ENCODE measurements at regions of chr2 and their contacts with region 1.

Region 1: DNA sequence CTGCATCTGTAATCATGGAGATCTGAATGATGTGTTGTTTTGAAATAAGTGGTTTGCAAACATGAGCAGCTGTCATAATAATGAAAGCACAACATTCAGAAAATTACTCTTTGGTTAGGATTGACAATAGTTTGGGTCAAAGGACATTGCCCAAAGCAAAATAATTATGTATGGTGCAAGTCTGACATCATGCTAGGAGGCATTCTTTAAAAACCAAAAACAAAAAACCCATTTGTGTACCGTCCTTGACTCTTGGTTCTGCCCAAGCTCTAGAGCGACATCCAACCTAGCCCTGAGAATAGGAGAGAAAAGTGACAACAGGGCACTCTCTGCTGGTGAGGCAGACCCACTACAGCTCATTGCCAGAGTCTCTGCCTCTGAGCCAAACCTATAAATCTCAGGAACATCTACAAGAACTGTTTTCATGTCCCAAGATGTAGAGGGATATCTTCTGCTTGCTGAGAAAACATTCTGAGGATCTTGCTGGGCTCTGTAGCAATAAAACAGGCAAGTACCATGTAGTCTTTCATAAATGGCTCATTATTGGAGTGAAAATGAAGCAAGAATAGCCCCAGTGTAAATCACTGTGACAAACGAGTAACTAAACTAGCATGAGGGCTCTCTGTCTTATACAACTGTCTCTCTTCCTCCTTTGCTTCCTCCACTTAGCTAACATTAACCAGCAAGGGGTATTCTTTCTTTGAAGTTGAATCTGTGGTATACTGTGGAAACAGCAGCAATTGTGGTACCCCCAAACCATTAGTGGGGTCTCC is 266.8 kb upstream of the CXCR4 start:
- DNase-seq: peak; percentile 87
- H3K4me3 Mint-ChIP-seq: peak overlapping the region; percentile 27
- H3K27ac Mint-ChIP-seq: peak overlapping the region; percentile 93
- H3K4me1 Mint-ChIP-seq: peaks cover 44% of the 10 kb centered on the region
- H3K27me3 Mint-ChIP-seq: no peaks in the 10 kb centered on the region

Region 2: GRCh38 chr2:135664623-135665068 is 720.1 kb before region 1 on chr2:
- intact Hi-C with region 1: loop called (anchors 5 kb)
- DNase-seq: no peak
- H3K4me3 Mint-ChIP-seq: no peak overlapping the region
- H3K27ac Mint-ChIP-seq: peak overlapping the region; percentile 79
- H3K4me1 Mint-ChIP-seq: peaks cover 31% of the 10 kb centered on the region
- H3K27me3 Mint-ChIP-seq: no peaks in the 10 kb centered on the region

Region 3: DNA sequence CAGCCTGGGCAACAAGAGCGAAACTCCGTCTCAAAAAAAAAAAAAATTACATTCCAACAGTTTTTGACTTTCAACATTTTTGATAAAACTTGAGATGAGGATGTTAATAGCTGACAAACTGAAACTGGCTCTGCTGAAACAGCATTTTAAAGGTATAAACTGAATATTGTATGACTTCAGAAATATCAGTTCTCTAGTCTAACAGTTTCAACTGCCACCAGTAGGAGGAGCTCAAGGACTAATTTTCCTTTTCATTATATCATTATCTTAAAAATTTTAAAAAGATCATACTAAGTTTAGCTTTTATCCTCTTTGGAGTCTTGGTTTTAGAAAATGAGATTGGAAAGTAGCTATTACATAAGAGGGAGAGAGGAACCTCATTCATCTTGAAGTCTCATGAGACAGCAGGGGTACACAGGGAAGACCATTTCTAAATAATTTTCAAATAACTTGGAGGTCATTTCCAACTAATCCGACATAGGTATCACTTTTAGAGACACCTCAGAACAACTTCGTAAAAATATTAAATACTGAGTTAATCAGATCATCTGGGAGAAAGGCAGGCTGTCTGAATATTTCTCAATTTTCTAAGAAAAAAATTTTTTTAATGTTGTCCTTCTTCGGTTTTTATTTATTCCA is 470.9 kb before region 1 on chr2:
- intact Hi-C with region 1: loop called (anchors 1 kb)
- DNase-seq: peak; percentile 86
- H3K4me3 Mint-ChIP-seq: no peak overlapping the region
- H3K27ac Mint-ChIP-seq: no peak overlapping the region
- H3K4me1 Mint-ChIP-seq: peaks cover 18% of the 10 kb centered on the region
- H3K27me3 Mint-ChIP-seq: no peaks in the 10 kb centered on the region

Region 4: DNA sequence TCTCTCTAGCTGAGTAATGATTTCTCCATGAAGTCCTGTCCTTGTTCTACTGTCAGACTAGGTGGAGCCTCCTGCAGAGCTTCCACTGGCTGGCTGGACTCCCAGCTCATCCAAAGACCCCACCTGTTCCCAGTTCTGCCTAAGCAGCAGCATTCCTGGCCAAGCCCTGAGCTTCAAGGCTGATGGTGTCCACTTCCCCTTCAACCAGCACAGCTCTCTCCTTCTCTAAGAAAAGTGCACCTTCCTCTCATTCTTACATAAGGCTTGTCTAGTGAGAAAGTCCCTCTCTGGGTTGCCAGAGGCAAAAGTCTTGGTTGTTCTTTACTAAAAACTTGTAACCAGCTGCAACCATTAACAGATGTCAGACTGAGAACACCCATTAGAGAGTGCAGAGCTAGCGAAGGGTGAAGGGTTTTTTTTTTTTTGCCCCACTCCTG is 325.7 kb before region 1 on chr2:
- intact Hi-C with region 1: loop called (anchors 1 kb)
- DNase-seq: peak; percentile 60
- H3K4me3 Mint-ChIP-seq: peak overlapping the region; percentile 21
- H3K27ac Mint-ChIP-seq: peak overlapping the region; percentile 9
- H3K4me1 Mint-ChIP-seq: peaks cover 70% of the 10 kb centered on the region
- H3K27me3 Mint-ChIP-seq: no peaks in the 10 kb centered on the region

Region 5: DNA sequence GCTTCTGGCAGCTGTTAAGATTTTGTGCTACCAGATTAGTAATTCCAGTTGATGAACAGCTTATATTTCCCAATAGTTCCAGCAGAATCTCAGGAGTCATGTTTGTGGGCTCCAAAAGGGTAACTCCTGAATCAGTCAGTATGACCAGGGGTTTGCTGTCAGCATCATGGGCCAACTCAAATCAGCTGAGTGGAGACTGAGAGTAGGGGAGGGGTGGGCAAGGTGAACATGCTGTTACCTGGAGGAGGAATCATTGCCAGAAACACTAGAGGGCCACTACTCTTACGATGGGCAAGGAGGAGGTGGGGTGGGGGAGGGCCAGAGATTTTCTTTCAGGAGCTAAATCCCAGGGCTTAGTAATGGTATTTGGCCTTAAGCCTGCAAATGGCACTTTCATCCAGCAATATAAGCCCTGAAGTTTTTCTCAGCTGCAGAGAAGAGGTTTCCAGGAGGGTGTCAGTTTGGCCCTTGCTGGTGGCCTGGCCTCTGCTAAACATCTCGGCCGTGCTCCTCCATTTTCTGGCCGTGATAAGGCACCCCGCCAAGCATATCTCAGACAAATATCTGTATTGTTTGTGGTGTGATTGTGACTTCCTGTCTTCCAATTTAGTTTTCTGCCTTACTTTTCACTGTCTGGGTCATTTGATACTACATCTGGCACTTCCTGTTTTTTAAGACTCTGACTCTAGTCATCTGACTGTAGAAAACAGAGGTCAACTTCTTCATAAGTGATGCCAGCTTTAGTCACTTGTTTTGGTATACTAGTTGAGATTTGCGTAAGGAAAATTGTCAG is 146.2 kb before region 1 on chr2:
- intact Hi-C with region 1: loop called (anchors 1 kb)
- DNase-seq: peak; percentile 81
- H3K4me3 Mint-ChIP-seq: peak overlapping the region; percentile 43
- H3K27ac Mint-ChIP-seq: peak overlapping the region; percentile 89
- H3K4me1 Mint-ChIP-seq: peaks cover 45% of the 10 kb centered on the region
- H3K27me3 Mint-ChIP-seq: no peaks in the 10 kb centered on the region

Region 6: GRCh38 chr2:136423516-136423996 is 38.8 kb after region 1 on chr2:
- intact Hi-C with region 1: loop called (anchors 1 kb)
- DNase-seq: peak; percentile 94
- H3K4me3 Mint-ChIP-seq: peak overlapping the region; percentile 81
- H3K27ac Mint-ChIP-seq: peak overlapping the region; percentile 7
- H3K4me1 Mint-ChIP-seq: peaks cover 21% of the 10 kb centered on the region
- H3K27me3 Mint-ChIP-seq: peaks cover 53% of the 10 kb centered on the region

Measured in activated CD4-positive, alpha-beta T cell treated with anti-CD3 and anti-CD28 coated beads, Interleukin-2, amount 10 ng/mL, durations not matched to agents 24 days and 14 days (primary cell).